CD4-positive, alpha-beta memory T cell (primary cell): ENCODE measurements at regions of chr17 and their contacts with region 1.

Region 1: GRCh38 chr17:32877164-32877764 is 340 bp upstream of the MYO1D start:
- DNase-seq: peak; percentile 87 to 97 (median 95)
- H3K4me3 ChIP-seq: peak overlapping the region in 1 of 2 donors; percentile 62
- H3K4me3 Mint-ChIP-seq: peak overlapping the region; percentile 82 to 91 (median 85)
- H3K27ac ChIP-seq: no peak overlapping the region
- H3K27ac Mint-ChIP-seq: peak overlapping the region; percentile 57 to 97 (median 89)
- H3K4me1 ChIP-seq: peaks cover 18% of the 10 kb centered on the region
- H3K4me1 Mint-ChIP-seq: peaks cover 6 to 19% (median 11%) of the 10 kb centered on the region in 4 donors
- H3K27me3 ChIP-seq: no peaks in the 10 kb centered on the region
- H3K27me3 Mint-ChIP-seq: peaks cover 0 to 2% of the 10 kb centered on the region in 2 donors

Region 2: DNA sequence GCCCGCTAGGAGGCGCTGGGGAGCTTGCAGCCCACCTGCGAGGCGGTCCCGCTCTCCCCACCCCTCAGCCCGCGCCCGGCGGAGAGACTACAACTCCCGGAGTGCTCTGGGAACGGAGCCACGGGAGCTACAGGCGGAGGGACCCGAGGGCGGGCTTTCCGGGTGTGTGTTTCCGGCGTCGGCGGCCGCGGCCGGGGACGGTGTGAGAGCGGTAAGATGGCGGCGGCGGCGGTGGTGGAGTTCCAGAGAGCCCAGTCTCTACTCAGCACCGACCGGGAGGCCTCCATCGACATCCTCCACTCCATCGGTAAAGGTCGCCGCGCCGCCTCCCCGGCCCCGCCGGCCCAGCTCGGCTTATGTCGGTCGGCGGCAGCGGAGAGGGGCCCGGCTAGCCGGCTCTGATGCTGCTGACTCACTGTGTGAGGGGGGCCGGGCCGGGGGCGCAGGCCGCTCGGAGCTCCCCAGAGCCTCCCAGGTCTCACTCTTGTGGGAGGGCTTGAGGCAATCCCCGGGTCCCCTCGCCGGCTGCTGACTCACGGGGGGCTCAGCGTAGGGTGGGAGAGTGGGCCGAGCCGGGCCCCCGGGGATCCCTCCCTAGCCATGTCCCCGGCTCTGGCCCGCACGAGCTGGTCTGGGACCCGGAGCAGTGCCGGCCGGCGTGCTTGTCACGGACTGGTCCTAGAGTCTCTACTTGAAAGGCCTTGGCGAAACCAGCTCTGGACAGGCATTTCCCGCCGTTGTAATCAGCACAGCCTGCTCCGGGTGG is 432.8 kb before region 1 on chr17 and contains the start of gene PSMD11:
- CTCF ChIA-PET with region 1: interaction called, 6 read pairs
- POLR2A ChIA-PET with region 1: interaction called, 3 read pairs
- intact Hi-C with region 1: loop called (anchors 5 kb)
- DNase-seq: peak; percentile 98 to 99 (median 99)
- H3K4me3 ChIP-seq: peak within 1 kb of the TSS; percentile 66 to 71
- H3K4me3 Mint-ChIP-seq: peak within 1 kb of the TSS; percentile 85 to 96 (median 90)
- H3K27ac ChIP-seq: peak within 1 kb of the TSS; percentile 79
- H3K27ac Mint-ChIP-seq: peak within 1 kb of the TSS; percentile 33 to 96 (median 90)
- H3K4me1 ChIP-seq: peaks cover 27% of the 10 kb centered on the region
- H3K4me1 Mint-ChIP-seq: peaks cover 21 to 43% (median 31%) of the 10 kb centered on the region in 4 donors
- H3K27me3 ChIP-seq: no peaks in the 10 kb centered on the region
- H3K27me3 Mint-ChIP-seq: no peaks in the 10 kb centered on the region
- total RNA-seq, gene PSMD11: 58.0 to 68.2 TPM

Region 3: DNA sequence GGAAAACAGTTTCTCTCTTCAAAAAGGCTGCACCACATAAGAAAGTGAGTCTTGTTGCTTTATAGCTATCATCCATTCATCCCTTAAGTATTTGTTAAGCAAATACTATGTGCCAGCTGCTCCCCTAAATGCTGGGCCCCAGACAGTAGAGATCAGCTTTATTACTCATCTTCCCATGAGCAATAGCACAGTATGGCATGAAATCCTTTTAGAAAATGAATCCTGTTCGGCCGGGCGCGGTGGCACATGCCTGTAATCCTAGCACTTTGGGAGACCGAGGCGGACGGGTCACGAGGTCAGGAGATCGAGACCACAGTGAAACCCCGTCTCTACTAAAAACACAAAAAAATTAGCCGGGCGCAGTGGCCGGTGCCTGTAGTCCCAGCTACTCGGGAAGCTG is 99.8 kb before region 1 on chr17:
- CTCF ChIA-PET with region 1: interaction called, 77 read pairs
- POLR2A ChIA-PET with region 1: interaction called, 13 read pairs
- intact Hi-C with region 1: no loop called
- DNase-seq: no peak
- H3K4me3 ChIP-seq: no peak overlapping the region
- H3K4me3 Mint-ChIP-seq: no peak overlapping the region
- H3K27ac ChIP-seq: no peak overlapping the region
- H3K27ac Mint-ChIP-seq: no peak overlapping the region
- H3K4me1 ChIP-seq: no peaks in the 10 kb centered on the region
- H3K4me1 Mint-ChIP-seq: no peaks in the 10 kb centered on the region
- H3K27me3 ChIP-seq: no peaks in the 10 kb centered on the region
- H3K27me3 Mint-ChIP-seq: no peaks in the 10 kb centered on the region

Region 4: GRCh38 chr17:32862940-32863339 is 14.3 kb before region 1 on chr17:
- CTCF ChIA-PET with region 1: interaction called, 26 read pairs
- POLR2A ChIA-PET with region 1: interaction called, 6 read pairs
- intact Hi-C with region 1: no loop called
- DNase-seq: no peak
- H3K4me3 ChIP-seq: no peak overlapping the region
- H3K4me3 Mint-ChIP-seq: no peak overlapping the region
- H3K27ac ChIP-seq: no peak overlapping the region
- H3K27ac Mint-ChIP-seq: no peak overlapping the region
- H3K4me1 ChIP-seq: no peaks in the 10 kb centered on the region
- H3K4me1 Mint-ChIP-seq: peaks cover 0 to 3% (median 0%) of the 10 kb centered on the region in 4 donors
- H3K27me3 ChIP-seq: no peaks in the 10 kb centered on the region
- H3K27me3 Mint-ChIP-seq: no peaks in the 10 kb centered on the region

Region 5: DNA sequence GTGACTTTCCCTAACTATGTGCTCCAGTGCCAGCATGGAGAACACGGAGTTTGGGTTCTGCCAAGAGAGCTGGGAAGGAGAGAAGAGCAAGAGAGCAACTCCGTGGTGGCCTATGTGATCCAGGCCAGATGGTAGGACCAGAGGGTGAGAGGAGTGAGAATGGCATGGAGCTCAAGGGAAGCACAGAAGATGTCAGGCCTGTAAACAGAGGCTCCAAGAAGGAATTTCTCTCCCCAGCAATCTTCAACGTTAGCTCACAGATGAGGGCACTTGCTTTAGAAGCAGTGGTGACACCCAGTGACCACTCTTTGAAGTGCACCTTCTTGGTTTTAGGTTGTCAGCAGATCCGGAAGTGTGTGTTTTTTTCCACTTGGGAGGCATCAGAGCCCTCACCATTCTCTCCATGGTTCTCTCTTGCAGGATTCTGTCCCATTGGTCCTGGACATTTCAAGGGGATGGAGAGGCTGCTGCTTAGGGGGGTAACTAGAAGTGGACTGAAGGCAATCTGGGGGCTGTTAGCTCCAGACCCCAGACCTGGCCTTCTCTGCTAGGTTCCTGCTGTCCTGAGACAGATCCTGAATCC is 32.6 kb after region 1 on chr17:
- CTCF ChIA-PET with region 1: interaction called, 12 read pairs
- POLR2A ChIA-PET with region 1: interaction called, 3 read pairs
- intact Hi-C with region 1: no loop called
- DNase-seq: peak; percentile 29 to 59 (median 32)
- H3K4me3 ChIP-seq: no peak overlapping the region
- H3K4me3 Mint-ChIP-seq: no peak overlapping the region
- H3K27ac ChIP-seq: no peak overlapping the region
- H3K27ac Mint-ChIP-seq: no peak overlapping the region
- H3K4me1 ChIP-seq: no peaks in the 10 kb centered on the region
- H3K4me1 Mint-ChIP-seq: peaks cover 0 to 1% (median 0%) of the 10 kb centered on the region in 4 donors
- H3K27me3 ChIP-seq: no peaks in the 10 kb centered on the region
- H3K27me3 Mint-ChIP-seq: peaks cover 0 to 2% of the 10 kb centered on the region in 2 donors

Region 6: GRCh38 chr17:33079201-33079600 is 201.9 kb after region 1 on chr17:
- CTCF ChIA-PET with region 1: no interaction called
- POLR2A ChIA-PET with region 1: no interaction called
- intact Hi-C with region 1: no loop called
- DNase-seq: no peak
- H3K4me3 ChIP-seq: no peak overlapping the region
- H3K4me3 Mint-ChIP-seq: no peak overlapping the region
- H3K27ac ChIP-seq: no peak overlapping the region
- H3K27ac Mint-ChIP-seq: no peak overlapping the region
- H3K4me1 ChIP-seq: no peaks in the 10 kb centered on the region
- H3K4me1 Mint-ChIP-seq: no peaks in the 10 kb centered on the region
- H3K27me3 ChIP-seq: peaks cover 3% of the 10 kb centered on the region
- H3K27me3 Mint-ChIP-seq: peaks cover 8 to 48% of the 10 kb centered on the region in 2 donors